Activated B cell treated with CpG ODN at 0.5 μM for 24 hours (primary cell): ENCODE measurements at regions of chr17 and their contacts with region 1.

Region 1: DNA sequence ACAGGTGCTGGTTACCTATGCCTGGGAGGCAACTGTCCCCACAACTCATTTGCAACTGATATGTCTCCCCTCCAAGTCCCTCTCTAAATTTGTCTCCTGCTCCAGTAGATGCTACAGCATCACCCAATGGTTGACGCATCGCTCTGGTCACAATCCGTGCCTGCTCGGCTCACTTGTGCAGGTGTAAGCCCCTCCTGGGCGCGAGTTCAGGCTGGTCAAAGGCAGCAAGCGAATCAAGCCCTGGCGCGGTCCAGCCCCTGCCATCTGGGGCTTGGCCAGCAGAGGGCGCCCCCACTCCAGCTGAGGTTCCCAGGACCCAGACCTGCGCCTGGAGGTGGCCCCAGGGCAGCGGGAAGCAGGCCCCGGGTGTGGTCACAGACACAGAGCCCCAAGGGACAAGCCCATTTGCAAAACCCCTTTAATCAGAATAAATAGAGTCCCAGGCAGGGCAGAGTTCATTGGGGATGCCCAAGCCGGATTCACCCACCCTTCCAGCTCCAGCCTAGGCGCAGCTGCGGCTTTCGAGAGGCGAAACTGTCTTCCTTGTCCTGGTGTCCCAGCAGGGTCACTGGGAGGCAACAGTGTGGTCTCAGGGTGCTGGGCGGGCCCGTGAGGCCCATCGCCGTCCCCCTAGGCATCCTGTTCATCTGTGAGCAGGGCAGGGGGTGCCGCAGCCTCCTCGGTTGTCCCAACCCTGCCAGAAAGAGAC is 15.9 kb downstream of the TMC6 start:
- DNase-seq: peak; percentile 89
- ATAC-seq: peak; percentile 79
- H3K4me3 Mint-ChIP-seq: no peak overlapping the region
- H3K27ac Mint-ChIP-seq: peak overlapping the region; percentile 80
- H3K4me1 Mint-ChIP-seq: peaks cover 26% of the 10 kb centered on the region
- H3K27me3 Mint-ChIP-seq: no peaks in the 10 kb centered on the region
- CTCF ChIP-seq: peak; percentile 55

Region 2: DNA sequence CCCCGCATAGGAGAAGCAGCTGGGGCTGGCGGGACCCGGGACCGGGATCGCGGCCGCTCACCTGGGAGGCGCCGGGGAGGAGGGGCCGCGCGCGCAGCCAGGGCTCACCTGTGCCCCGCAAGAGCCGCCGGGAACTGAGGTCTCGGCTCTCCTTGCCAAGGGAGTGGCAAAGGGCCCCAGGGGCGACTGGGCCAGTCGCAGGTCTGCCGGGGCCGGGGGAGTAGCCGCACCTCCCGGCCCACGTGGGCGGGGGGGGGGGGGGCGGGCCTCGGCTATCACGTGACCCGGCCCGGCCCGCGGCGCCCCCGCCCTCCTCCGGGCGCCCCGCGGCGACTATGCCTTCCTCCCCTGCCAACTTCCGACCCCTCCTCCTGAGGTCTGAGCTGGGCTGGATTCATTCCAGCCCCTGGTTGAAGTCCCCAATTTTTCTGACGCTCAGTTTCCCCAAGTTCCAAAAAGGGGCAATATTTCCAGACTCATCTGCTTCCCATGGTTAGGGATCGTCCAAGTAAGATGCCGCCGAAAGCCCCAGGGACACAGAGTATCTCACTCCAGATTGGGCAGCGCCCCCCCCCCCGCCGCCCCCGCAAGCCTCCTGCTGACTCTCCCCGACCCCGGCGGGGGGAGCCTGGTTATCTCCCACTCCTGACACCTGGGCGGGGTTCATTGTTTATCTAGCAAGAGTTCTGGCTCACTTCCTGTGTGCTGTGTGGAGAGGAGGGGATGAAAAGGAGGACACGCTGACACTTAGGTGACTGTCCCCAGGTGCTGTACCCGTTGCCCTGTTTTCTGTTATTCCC is 16.1 kb after region 1 on chr17 and contains the start of gene TMC6:
- CTCF ChIA-PET with region 1: interaction called, 4 read pairs
- POLR2A ChIA-PET with region 1: interaction called, 1,040 read pairs
- intact Hi-C with region 1: loop called (anchors 1 kb)
- DNase-seq: peak; percentile 66
- ATAC-seq: peak; percentile 17
- H3K4me3 Mint-ChIP-seq: peak within 1 kb of the TSS; percentile 92
- H3K27ac Mint-ChIP-seq: peak within 1 kb of the TSS; percentile 93
- H3K4me1 Mint-ChIP-seq: peaks cover 74% of the 10 kb centered on the region
- H3K27me3 Mint-ChIP-seq: no peaks in the 10 kb centered on the region
- CTCF ChIP-seq: no peak
- total RNA-seq, gene TMC6: 746 and 896 TPM in 2 replicates

Region 3: DNA sequence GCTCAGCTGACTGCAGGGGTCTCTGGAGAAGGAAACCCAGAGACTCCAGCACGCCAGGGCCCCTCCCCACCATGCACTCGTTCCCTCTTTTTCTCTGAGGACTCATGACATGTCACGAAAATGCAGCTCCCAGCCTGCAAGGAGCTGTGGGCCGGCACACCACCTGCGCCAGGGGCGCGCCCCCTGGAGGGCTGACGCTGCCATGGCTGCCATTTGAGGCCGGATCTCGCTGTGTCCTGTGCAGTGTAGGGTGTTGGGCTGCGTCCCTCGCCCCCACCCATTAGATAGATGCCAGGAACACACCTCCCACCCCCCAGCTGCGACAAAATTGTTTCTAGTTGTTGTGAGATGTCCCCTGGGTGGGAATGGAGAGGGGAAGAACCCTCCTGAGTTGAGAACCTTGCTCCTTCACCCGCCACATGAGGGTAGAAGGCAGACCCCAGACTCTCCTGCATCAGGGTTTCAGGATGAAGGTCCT is 63.9 kb after region 1 on chr17:
- CTCF ChIA-PET with region 1: interaction called, 32 read pairs
- POLR2A ChIA-PET with region 1: interaction called, 2,404 read pairs
- intact Hi-C with region 1: loop called (anchors 1 kb)
- DNase-seq: peak; percentile 76
- ATAC-seq: peak; percentile 69
- H3K4me3 Mint-ChIP-seq: no peak overlapping the region
- H3K27ac Mint-ChIP-seq: peak overlapping the region; percentile 63
- H3K4me1 Mint-ChIP-seq: peaks cover 79% of the 10 kb centered on the region
- H3K27me3 Mint-ChIP-seq: no peaks in the 10 kb centered on the region
- CTCF ChIP-seq: peak; percentile 92

Region 4: DNA sequence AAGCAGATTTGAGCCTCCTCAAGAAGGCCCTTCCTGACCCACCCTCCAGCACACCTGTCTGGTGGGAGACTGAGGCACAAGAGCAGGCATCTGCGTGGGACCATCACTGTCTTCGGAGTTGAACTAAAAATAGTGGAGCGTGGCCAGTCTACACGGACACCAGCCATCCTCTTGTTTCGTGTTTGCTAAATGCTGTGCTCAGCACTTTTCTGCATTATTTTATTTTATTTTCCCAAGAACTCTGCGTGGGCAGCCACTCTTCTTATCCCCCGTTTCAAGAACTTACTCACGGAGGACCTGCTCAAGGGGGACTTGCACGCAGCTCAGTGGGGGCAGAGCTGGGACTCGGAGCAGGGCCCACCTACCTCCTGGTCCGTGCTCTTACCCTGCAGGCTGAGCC is 186.4 kb after region 1 on chr17:
- CTCF ChIA-PET with region 1: no interaction called
- POLR2A ChIA-PET with region 1: interaction called, 12 read pairs
- intact Hi-C with region 1: no loop called
- DNase-seq: no peak
- ATAC-seq: no peak
- H3K4me3 Mint-ChIP-seq: no peak overlapping the region
- H3K27ac Mint-ChIP-seq: no peak overlapping the region
- H3K4me1 Mint-ChIP-seq: no peaks in the 10 kb centered on the region
- H3K27me3 Mint-ChIP-seq: no peaks in the 10 kb centered on the region
- CTCF ChIP-seq: no peak